ENCODE measurements at regions of chr1 and their contacts with region 1.

Region 1: GRCh38 chr1:247390116-247390791 is 25.7 kb upstream of the NLRP3 start:
- DNase-seq: peak; percentile 91
- ATAC-seq: peak; percentile 97
- H3K4me3 Mint-ChIP-seq: peak overlapping the region; percentile 63
- H3K27ac Mint-ChIP-seq: peak overlapping the region; percentile 75
- H3K4me1 Mint-ChIP-seq: peaks cover 4% of the 10 kb centered on the region
- H3K27me3 Mint-ChIP-seq: no peaks in the 10 kb centered on the region

Region 2: GRCh38 chr1:247373721-247374141 is 16.5 kb before region 1 on chr1:
- CTCF ChIA-PET with region 1: interaction called, 41 read pairs
- POLR2A ChIA-PET with region 1: interaction called, 3 read pairs
- DNase-seq: peak; percentile 78
- ATAC-seq: peak; percentile 83
- H3K4me3 Mint-ChIP-seq: peak overlapping the region; percentile 23
- H3K27ac Mint-ChIP-seq: no peak overlapping the region
- H3K4me1 Mint-ChIP-seq: peaks cover 6% of the 10 kb centered on the region
- H3K27me3 Mint-ChIP-seq: peaks cover 11% of the 10 kb centered on the region

Region 3: GRCh38 chr1:247401310-247402119 is 11.3 kb after region 1 on chr1:
- CTCF ChIA-PET with region 1: interaction called, 14 read pairs
- POLR2A ChIA-PET with region 1: no interaction called
- DNase-seq: no peak
- ATAC-seq: no peak
- H3K4me3 Mint-ChIP-seq: no peak overlapping the region
- H3K27ac Mint-ChIP-seq: no peak overlapping the region
- H3K4me1 Mint-ChIP-seq: peaks cover 3% of the 10 kb centered on the region
- H3K27me3 Mint-ChIP-seq: peaks cover 16% of the 10 kb centered on the region

Region 4: GRCh38 chr1:247415423-247416361 is 25.4 kb after region 1 on chr1 and contains the start of gene NLRP3:
- CTCF ChIA-PET with region 1: interaction called, 11 read pairs
- POLR2A ChIA-PET with region 1: interaction called, 4 read pairs
- DNase-seq: peak; percentile 68
- ATAC-seq: peak; percentile 88
- H3K4me3 Mint-ChIP-seq: peak within 1 kb of the TSS; percentile 82
- H3K27ac Mint-ChIP-seq: peak within 1 kb of the TSS; percentile 88
- H3K4me1 Mint-ChIP-seq: peaks cover 48% of the 10 kb centered on the region
- H3K27me3 Mint-ChIP-seq: peaks cover 3% of the 10 kb centered on the region
- total RNA-seq, gene NLRP3: 4.5 to 4.7 TPM

Region 5: GRCh38 chr1:247487057-247487456 is 96.8 kb after region 1 on chr1:
- CTCF ChIA-PET with region 1: interaction called, 62 read pairs
- POLR2A ChIA-PET with region 1: interaction called, 3 read pairs
- DNase-seq: peak; percentile 41
- ATAC-seq: peak; percentile 69
- H3K4me3 Mint-ChIP-seq: no peak overlapping the region
- H3K27ac Mint-ChIP-seq: no peak overlapping the region
- H3K4me1 Mint-ChIP-seq: no peaks in the 10 kb centered on the region
- H3K27me3 Mint-ChIP-seq: peaks cover 15% of the 10 kb centered on the region